Thyroid gland (tissue), 4 donors: ENCODE measurements at regions of chr5 and their contacts with region 1.

Region 1: GRCh38 chr5:138583984-138584637 is 8.9 kb upstream of the HSPA9 start:
- DNase-seq: peak; percentile 44 to 52
- H3K4me3 ChIP-seq: no peak overlapping the region
- H3K27ac ChIP-seq: peak overlapping the region in 1 of 3 donors; percentile 54
- H3K4me1 ChIP-seq: peaks cover 15 to 21% of the 10 kb centered on the region in 2 donors
- H3K27me3 ChIP-seq: no peaks in the 10 kb centered on the region
- CTCF ChIP-seq: no peak
- POLR2A ChIP-seq: no peak

Region 2: DNA sequence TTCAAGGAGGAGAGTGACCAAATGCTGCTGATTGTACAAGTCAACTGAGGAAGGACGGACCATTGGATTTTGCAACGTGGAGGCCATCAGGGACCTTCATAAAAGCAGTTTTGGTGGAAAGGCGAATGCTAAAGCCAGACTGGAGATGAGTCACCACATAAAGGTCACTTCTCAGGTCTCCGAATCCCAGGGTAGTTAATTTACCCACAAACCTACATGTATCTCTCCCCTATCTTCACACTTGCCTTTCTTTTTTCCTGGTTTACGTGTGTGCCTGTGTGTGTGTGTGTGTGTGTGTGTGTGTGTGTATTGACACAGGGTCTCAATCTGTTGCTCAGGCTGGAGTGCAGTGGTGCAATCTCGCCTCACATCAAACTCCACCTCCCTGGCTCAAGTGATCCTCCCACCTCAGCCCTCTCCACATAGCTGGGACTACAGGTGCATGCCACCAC is 164.5 kb after region 1 on chr5:
- intact Hi-C with region 1: loop called (anchors 10 kb)
- DNase-seq: no peak
- H3K4me3 ChIP-seq: no peak overlapping the region
- H3K27ac ChIP-seq: no peak overlapping the region
- H3K4me1 ChIP-seq: peaks cover 0 to 7% of the 10 kb centered on the region in 2 donors
- H3K27me3 ChIP-seq: no peaks in the 10 kb centered on the region
- CTCF ChIP-seq: no peak
- POLR2A ChIP-seq: no peak

Region 3: DNA sequence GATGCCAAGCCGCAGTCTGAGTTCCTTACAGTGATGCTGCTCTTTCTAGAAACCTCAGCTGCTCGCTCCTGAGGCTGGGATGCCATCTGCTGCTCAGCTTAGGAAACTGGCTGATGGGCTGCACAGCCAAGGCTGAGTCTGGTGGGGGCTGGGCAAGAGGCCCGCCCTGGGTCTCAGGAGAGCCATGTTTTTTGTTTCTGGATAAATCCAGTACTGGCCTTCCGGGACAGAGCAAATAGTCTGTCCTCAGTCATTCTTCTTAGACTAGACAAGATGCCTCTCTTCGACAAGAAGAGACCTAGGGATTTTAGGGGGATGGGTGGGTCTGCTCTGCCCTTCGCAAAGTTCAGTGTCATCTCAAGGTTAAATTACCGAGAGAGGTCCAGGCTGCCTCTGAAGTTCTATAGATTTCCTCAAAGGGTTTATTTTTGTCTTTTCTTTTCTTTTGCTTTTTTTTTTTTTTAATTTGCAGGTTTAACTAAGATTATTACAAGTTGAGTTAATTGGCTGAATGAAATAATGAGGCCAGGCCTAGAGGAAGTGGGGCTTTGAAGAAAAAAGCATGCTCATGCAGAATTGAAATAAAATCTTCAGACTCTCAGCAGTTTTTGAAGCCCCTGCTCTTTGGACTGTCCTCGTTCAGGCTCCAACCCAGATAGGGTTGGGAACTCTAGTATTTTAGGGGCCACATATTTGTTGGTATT is 678.8 kb after region 1 on chr5:
- intact Hi-C with region 1: loop called (anchors 10 kb)
- DNase-seq: peak; percentile 89 to 91
- H3K4me3 ChIP-seq: no peak overlapping the region
- H3K27ac ChIP-seq: peak overlapping the region in 1 of 3 donors; percentile 8
- H3K4me1 ChIP-seq: peaks cover 0 to 3% of the 10 kb centered on the region in 2 donors
- H3K27me3 ChIP-seq: no peaks in the 10 kb centered on the region
- CTCF ChIP-seq: peak; percentile 62 to 97 (median 94)
- POLR2A ChIP-seq: no peak